SK-N-SH (cell line): ENCODE measurements at regions of chr6 and their contacts with region 1.

Region 1: GRCh38 chr6:31087494-31088089 is 24.8 kb downstream of the C6orf15 start:
- DNase-seq: peak; percentile 80
- H3K4me3 ChIP-seq: peak overlapping the region in 1 of 2 experiments; percentile 47; a peak in 3 of 4 replicates
- H3K27ac ChIP-seq: peak overlapping the region in 1 of 2 experiments; percentile 94; a peak in 3 of 4 replicates
- H3K4me1 ChIP-seq: peaks cover 3 to 11% of the 10 kb centered on the region in 2 experiments; a peak in 2 of 4 replicates
- H3K27me3 ChIP-seq: no peaks in the 10 kb centered on the region
- CTCF ChIP-seq: peak; percentile 92
- EP300 ChIP-seq: no peak
- RAD21 ChIP-seq: peak; percentile 86

Region 2: GRCh38 chr6:30725713-30726505 is 361.7 kb before region 1 on chr6:
- CTCF ChIA-PET with region 1: no interaction called
- POLR2A ChIA-PET with region 1: no interaction called
- DNase-seq: peak; percentile 41
- H3K4me3 ChIP-seq: no peak overlapping the region
- H3K27ac ChIP-seq: peak overlapping the region; percentile 29 to 93; a peak in 3 of 4 replicates
- H3K4me1 ChIP-seq: peaks cover 21 to 31% of the 10 kb centered on the region in 2 experiments
- H3K27me3 ChIP-seq: no peaks in the 10 kb centered on the region
- CTCF ChIP-seq: no peak
- EP300 ChIP-seq: no peak
- RAD21 ChIP-seq: no peak

Region 3: DNA sequence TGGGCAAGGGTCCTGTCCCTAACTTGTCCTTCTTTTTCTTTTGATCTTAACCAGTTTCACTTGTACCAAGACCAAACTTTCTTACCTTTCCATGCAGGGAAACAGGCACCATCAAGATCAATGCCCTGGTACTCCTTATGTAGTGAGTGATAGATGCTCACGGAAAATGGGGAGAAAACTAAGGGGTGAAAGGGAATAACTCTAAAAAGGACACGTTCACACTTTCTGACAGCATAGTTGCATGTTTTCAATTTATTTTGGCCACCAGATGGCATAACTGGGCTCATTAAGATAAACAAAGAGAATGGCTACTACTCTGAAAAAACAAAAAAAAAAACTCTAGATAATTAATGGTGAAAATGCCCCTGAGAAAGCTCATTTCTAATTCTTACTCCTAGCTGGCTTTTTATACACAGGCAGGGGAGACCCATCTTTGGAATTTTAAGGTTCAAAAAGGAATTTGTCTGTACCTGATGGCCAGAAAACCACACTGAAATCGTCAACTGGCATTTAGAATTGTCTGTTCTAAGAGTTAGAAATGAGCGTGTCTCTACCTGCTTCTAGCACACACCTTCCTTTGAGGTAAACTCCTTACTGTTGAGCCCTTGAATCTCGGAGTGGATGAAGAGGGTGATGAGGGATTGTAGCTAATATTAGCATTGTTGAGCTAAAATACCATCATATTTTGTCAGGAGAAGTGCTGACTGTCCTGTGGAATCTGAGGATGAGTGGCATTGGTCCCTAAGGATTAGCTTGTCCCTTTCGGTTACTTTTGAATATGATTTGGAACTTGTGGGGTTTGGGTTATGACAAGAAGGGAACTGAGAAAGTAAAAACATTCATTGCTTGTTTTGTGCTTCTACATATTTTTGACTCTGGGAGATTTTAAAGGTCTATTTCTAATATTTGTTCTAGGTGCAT is 265.5 kb before region 1 on chr6:
- CTCF ChIA-PET with region 1: interaction called, 36 read pairs
- POLR2A ChIA-PET with region 1: no interaction called
- DNase-seq: peak; percentile 45
- H3K4me3 ChIP-seq: no peak overlapping the region
- H3K27ac ChIP-seq: no peak overlapping the region; a peak in 1 of 4 replicates
- H3K4me1 ChIP-seq: peaks cover 0 to 28% of the 10 kb centered on the region in 2 experiments; a peak in 2 of 4 replicates
- H3K27me3 ChIP-seq: no peaks in the 10 kb centered on the region
- CTCF ChIP-seq: peak; percentile 68
- EP300 ChIP-seq: no peak
- RAD21 ChIP-seq: peak; percentile 47

Region 4: DNA sequence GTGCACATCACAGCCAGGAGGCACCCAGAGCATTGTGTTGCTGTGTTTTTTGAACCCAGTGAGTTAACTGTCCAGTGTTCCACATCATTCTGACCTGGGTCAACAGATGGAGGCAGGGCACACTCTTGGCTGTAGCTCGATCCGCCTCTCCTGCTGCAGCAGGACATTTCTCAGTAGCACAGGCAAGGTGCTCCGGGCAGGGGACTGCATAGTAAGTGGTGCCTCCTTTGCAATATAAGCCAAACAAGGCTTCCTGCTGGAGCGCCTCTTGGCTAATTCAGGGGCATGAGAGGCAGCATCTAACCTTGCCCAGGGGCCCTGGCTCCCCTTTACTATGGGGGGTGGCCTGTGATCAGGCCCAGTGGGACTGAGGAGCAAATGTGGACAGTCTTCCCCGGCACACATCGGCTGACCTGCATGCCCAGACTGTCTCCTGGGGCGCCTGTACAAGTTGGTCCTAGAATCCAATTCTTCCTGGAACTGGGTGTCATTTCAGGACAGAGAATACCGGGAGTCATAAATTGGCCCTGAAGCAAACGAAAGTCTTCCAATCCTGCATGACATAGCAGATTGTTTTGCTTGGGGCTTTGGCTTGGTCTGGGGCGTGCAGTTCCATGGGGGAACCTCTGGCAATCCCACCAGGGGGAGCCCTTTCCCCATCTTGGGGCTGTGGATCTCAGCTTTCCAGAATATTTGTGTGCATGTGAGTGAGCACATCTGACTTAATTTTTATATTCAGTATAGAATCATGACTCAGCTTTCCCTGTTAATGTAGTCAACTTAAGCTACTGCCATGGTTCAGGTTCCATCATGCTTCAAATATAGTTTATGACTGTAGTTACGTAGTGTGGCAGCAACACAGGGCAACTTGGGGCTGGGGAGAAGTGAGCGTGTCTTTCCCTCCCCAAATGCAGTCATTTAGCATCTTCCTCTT is 259.3 kb before region 1 on chr6:
- CTCF ChIA-PET with region 1: interaction called, 36 read pairs
- POLR2A ChIA-PET with region 1: no interaction called
- DNase-seq: peak; percentile 80
- H3K4me3 ChIP-seq: no peak overlapping the region
- H3K27ac ChIP-seq: peak overlapping the region in 1 of 2 experiments; percentile 38; a peak in 1 of 4 replicates
- H3K4me1 ChIP-seq: peaks cover 7 to 12% of the 10 kb centered on the region in 2 experiments; a peak in 3 of 4 replicates
- H3K27me3 ChIP-seq: no peaks in the 10 kb centered on the region
- CTCF ChIP-seq: peak; percentile 97
- EP300 ChIP-seq: no peak
- RAD21 ChIP-seq: peak; percentile 97

Region 5: GRCh38 chr6:30914076-30914853 is 173.3 kb before region 1 on chr6 and contains the start of gene VARS2:
- CTCF ChIA-PET with region 1: interaction called, 86 read pairs
- POLR2A ChIA-PET with region 1: interaction called, 4 read pairs
- DNase-seq: peak; percentile 99
- H3K4me3 ChIP-seq: peak within 1 kb of the TSS; percentile 56 to 66
- H3K27ac ChIP-seq: peak within 1 kb of the TSS; percentile 79 to 87
- H3K4me1 ChIP-seq: peaks cover 9 to 18% of the 10 kb centered on the region in 2 experiments; a peak in 3 of 4 replicates
- H3K27me3 ChIP-seq: no peaks in the 10 kb centered on the region
- CTCF ChIP-seq: peak; percentile 36; the same call in 1 of the 2 replicates
- EP300 ChIP-seq: no peak
- RAD21 ChIP-seq: peak; percentile 38
- polyA plus RNA-seq, gene VARS2: 31.2 TPM in 2 replicates

Region 6: GRCh38 chr6:31049518-31049917 is 38.1 kb before region 1 on chr6:
- CTCF ChIA-PET with region 1: interaction called, 11 read pairs
- POLR2A ChIA-PET with region 1: no interaction called
- DNase-seq: no peak
- H3K4me3 ChIP-seq: no peak overlapping the region
- H3K27ac ChIP-seq: 0 out of 4 replicates have a peak overlapping the region, but pooled peaks of 1 of the 2 experiments have one; percentile 36
- H3K4me1 ChIP-seq: no peaks in the 10 kb centered on the region; a peak in 1 of 4 replicates
- H3K27me3 ChIP-seq: no peaks in the 10 kb centered on the region
- CTCF ChIP-seq: no peak
- EP300 ChIP-seq: no peak
- RAD21 ChIP-seq: no peak

Region 7: GRCh38 chr6:31068669-31069340 is 18.8 kb before region 1 on chr6:
- CTCF ChIA-PET with region 1: interaction called, 29 read pairs
- POLR2A ChIA-PET with region 1: no interaction called
- DNase-seq: peak; percentile 86
- H3K4me3 ChIP-seq: no peak overlapping the region; a peak in 1 of 4 replicates
- H3K27ac ChIP-seq: no peak overlapping the region
- H3K4me1 ChIP-seq: peaks cover 6 to 13% of the 10 kb centered on the region in 2 experiments; a peak in 3 of 4 replicates
- H3K27me3 ChIP-seq: no peaks in the 10 kb centered on the region
- CTCF ChIP-seq: peak; percentile 90
- EP300 ChIP-seq: no peak
- RAD21 ChIP-seq: peak; percentile 65

Region 8: DNA sequence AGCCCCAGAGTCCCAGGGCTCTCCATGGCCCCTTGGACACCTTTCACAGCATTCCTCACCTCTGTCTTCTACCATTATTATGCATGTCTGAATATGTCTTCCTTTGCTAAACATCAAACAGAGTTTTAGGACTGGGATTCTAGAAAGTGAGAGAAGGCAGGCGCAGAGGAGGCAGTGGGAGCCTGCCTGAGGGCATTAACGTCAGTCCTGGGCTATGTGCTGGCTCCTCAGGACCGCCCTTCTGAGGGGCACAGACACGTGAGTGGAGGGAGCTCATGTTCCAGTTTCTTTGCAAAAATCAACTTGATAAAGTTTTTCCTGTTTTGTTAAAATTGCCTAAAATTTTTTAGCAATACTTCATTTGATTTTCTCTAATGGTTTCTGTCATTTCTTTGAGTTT is 13.2 kb before region 1 on chr6:
- CTCF ChIA-PET with region 1: interaction called, 33 read pairs
- POLR2A ChIA-PET with region 1: no interaction called
- DNase-seq: no peak
- H3K4me3 ChIP-seq: no peak overlapping the region
- H3K27ac ChIP-seq: no peak overlapping the region
- H3K4me1 ChIP-seq: peaks cover 6 to 10% of the 10 kb centered on the region in 2 experiments; a peak in 3 of 4 replicates
- H3K27me3 ChIP-seq: no peaks in the 10 kb centered on the region
- CTCF ChIP-seq: no peak
- EP300 ChIP-seq: no peak
- RAD21 ChIP-seq: no peak